ENCODE measurements at regions of chrX and their contacts with region 1.

Region 1: GRCh38 chrX:50204364-50204899 is at the start of gene CCNB3:
- DNase-seq: peak; percentile 88
- H3K4me3 ChIP-seq: peak within 1 kb of the TSS; percentile 59
- H3K27ac ChIP-seq: peak within 1 kb of the TSS; percentile 58
- H3K4me1 ChIP-seq: peaks cover 13% of the 10 kb centered on the region
- CTCF ChIP-seq: peak; percentile 49; the same call in 1 of the 2 replicates
- total RNA-seq, gene CCNB3: 0.95 and 2.7 TPM in 2 replicates

Region 2: DNA sequence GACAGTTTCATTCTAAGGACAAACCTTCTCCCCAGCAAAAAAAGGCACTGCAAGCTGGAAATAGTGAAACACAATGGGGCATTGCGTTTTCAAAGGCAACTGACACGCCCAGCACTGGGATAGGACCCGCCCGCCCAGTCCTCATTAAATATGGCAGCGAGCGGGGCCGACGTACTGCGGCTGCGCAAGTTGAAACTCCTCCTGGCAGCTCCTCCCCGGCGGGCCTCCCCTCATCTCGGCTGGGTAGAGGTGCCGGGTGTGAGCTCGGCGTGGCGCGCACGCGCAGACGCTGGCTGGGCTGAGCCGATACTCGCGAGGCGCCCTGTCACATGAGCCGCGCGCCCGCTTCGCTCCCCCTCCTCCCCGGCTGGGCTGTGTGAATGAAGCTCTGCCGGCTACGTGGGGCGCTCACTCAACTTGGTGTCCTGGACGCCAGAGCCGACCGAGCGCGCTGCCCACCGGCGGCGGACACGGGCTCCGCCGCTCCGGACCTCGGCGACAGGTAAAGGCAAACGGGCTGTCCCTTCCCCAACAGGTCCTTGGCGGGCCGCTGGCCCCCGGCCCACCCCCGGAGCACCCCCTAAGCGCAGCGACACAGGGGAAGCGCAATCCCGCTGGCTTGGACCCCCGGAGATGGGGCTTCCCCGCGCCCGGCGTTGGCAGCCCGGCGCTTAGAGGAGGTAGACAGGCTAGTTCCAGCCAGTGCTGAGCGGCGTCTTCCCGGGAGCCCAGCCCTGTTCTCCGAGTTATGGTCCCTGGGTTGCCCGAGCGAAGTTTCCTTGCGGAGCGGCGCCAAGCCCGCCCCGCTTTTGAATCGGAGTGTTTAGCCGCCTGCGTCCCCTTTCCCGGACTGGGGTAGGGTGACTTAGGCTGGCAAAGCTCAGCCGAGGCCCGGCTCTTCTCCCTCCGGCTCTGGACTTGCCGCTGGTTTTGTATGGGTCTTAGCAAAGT is 281.9 kb before region 1 on chrX and contains the start of gene CLCN5:
- CTCF ChIA-PET with region 1: no interaction called
- POLR2A ChIA-PET with region 1: interaction called, 3 read pairs
- intact Hi-C with region 1: loop called (anchors 5 kb)
- DNase-seq: peak; percentile 92
- H3K4me3 ChIP-seq: peak within 1 kb of the TSS; percentile 79
- H3K27ac ChIP-seq: no peak within 1 kb of the TSS
- H3K4me1 ChIP-seq: peaks cover 4% of the 10 kb centered on the region
- CTCF ChIP-seq: no peak
- total RNA-seq, gene CLCN5: 5.2 and 5.3 TPM in 2 replicates

Region 3: GRCh38 chrX:49947781-49948180 is 256.7 kb before region 1 on chrX:
- CTCF ChIA-PET with region 1: no interaction called
- POLR2A ChIA-PET with region 1: no interaction called
- intact Hi-C with region 1: no loop called
- DNase-seq: no peak
- H3K4me3 ChIP-seq: no peak overlapping the region
- H3K27ac ChIP-seq: no peak overlapping the region
- H3K4me1 ChIP-seq: no peaks in the 10 kb centered on the region
- CTCF ChIP-seq: no peak

Region 4: DNA sequence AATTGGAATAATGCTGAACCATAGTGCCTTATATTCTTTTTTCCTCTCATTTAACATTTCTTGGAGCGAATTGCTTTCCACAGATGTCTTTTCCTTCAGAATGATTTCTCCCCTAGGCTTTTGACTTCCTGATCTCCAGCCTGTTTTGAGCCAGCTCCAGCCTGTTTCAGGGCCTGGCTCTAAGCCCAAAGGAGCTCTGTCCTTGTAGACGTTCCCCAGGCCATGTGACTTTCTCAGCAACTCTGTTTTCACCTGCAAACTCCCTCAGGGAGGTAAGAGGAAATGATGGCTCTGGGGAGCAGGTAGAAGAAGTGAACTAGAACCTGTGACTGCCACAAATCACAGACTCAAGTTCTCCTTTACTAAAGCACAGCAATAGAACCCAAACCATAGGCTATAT is 92.7 kb before region 1 on chrX:
- CTCF ChIA-PET with region 1: no interaction called
- POLR2A ChIA-PET with region 1: no interaction called
- intact Hi-C with region 1: no loop called
- DNase-seq: no peak
- H3K4me3 ChIP-seq: no peak overlapping the region
- H3K27ac ChIP-seq: no peak overlapping the region
- H3K4me1 ChIP-seq: no peaks in the 10 kb centered on the region
- CTCF ChIP-seq: no peak

Region 5: DNA sequence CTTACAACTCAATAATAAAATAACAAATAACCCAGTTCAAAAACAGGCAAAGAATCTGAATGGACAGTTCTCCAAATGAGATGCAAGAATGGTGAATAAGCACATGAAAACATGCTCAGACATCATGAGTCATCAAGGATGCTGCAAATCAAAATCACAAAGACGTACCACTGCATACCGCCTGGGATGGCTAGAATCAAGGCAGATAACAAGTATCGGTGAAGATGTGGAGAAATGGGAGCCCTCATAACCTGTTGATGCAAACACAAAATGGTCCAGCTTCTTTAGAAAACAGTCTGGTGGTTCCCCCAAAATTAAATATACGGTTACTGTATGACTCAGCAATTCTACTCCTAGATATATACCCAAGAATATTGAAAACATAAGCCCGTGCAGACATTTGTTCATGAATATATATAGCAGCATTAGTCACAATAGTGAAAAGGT is 36.2 kb before region 1 on chrX:
- CTCF ChIA-PET with region 1: no interaction called
- POLR2A ChIA-PET with region 1: no interaction called
- intact Hi-C with region 1: no loop called
- DNase-seq: no peak
- H3K4me3 ChIP-seq: no peak overlapping the region
- H3K27ac ChIP-seq: no peak overlapping the region
- H3K4me1 ChIP-seq: no peaks in the 10 kb centered on the region
- CTCF ChIP-seq: no peak

Region 6: DNA sequence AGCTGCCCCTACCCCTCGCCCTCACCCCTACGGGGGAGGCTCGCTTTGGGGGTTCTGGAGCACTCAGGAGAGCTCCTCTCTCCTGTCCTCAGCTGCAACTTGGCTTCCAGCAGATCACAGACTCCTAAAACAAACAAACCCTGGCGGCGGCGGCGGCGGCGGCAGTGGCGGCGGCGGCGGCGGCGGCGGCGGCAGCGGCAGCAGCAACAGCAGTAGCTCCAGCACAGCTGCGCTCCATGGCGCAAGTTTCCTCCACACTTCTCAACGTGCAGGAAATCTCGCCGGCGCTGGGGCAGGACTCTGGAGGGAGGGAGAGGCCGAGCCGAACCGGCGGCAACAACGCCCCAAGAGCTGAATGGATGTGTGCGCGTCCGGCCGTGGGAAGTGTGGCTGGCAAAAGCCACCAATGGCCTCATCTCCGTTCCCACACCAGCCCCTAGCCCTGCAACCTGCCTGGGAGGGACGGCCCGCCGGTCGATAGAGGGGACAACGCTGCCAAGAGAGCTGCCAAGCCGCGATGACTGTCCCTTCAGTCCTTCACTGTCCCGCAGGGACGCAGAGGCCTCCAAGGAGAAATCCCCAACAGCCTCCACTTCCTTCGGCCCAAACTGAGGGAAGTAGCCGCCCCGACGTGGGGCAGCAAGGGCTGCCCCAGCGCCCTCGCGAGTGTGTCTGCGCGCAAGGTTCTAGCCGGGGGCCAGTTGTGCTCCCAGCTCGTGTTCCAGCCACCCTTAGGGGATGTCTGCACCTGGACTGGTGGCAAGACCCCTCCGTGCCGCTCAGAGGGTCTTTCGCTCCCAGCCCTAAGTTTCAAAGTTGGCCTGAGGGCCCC is 608.8 kb after region 1 on chrX:
- CTCF ChIA-PET with region 1: no interaction called
- POLR2A ChIA-PET with region 1: no interaction called
- intact Hi-C with region 1: no loop called
- DNase-seq: no peak
- H3K4me3 ChIP-seq: no peak overlapping the region
- H3K27ac ChIP-seq: no peak overlapping the region
- H3K4me1 ChIP-seq: no peaks in the 10 kb centered on the region
- CTCF ChIP-seq: no peak